ENCODE measurements at regions of chr4 and their contacts with region 1.

Region 1: DNA sequence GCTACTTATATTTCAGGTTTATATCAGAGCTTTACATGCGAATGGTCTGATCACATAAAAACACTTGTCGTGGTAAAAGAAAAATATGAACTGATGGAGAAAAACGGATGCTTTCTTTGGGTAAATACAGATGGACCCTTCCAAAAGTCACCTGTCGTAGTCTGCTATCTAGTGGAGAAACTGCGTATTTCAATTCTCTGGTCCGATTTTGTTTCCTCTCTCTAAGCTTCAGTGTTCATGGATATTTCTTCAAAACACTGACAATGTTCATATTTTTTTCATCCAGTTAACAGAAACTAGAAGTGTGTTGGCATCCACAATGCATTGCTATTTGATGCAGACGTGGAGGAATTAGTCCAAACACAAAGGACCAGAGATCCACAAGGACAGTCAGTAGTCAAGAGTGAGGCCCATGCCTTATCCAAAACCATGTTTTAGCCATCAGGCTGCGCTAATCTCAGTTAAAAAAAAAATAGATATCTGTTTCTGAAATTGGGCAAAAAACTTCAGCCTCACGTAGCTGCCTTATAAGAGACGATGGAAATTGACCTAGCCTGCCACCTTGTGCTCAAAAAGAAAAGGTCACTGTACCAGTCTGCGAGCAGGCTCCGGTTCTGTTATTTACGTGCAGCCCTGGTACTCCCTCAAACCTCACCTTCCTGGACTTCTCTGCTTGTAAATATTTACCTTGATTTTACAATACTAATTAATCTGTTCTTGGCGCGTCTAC is 16.0 kb downstream of the MEPE start:
- DNase-seq: peak; percentile 72
- H3K4me3 Mint-ChIP-seq: peak overlapping the region; percentile 20
- H3K27ac Mint-ChIP-seq: no peak overlapping the region
- H3K4me1 Mint-ChIP-seq: peaks cover 25% of the 10 kb centered on the region
- H3K27me3 Mint-ChIP-seq: no peaks in the 10 kb centered on the region
- CTCF ChIP-seq: peak; percentile 39

Region 2: GRCh38 chr4:87270144-87270543 is 578.6 kb before region 1 on chr4:
- CTCF ChIA-PET with region 1: interaction called, 6 read pairs
- POLR2A ChIA-PET with region 1: interaction called, 3 read pairs
- intact Hi-C with region 1: loop called (anchors 1 kb)
- DNase-seq: peak; percentile 63
- H3K4me3 Mint-ChIP-seq: no peak overlapping the region
- H3K27ac Mint-ChIP-seq: no peak overlapping the region
- H3K4me1 Mint-ChIP-seq: no peaks in the 10 kb centered on the region
- H3K27me3 Mint-ChIP-seq: no peaks in the 10 kb centered on the region
- CTCF ChIP-seq: peak; percentile 59

Region 3: GRCh38 chr4:87465739-87466366 is 382.9 kb before region 1 on chr4:
- CTCF ChIA-PET with region 1: interaction called, 15 read pairs
- POLR2A ChIA-PET with region 1: no interaction called
- intact Hi-C with region 1: loop called (anchors 5 kb)
- DNase-seq: peak; percentile 50
- H3K4me3 Mint-ChIP-seq: no peak overlapping the region
- H3K27ac Mint-ChIP-seq: no peak overlapping the region
- H3K4me1 Mint-ChIP-seq: no peaks in the 10 kb centered on the region
- H3K27me3 Mint-ChIP-seq: no peaks in the 10 kb centered on the region
- CTCF ChIP-seq: peak; percentile 47

Region 4: GRCh38 chr4:87865960-87866598 is 17.3 kb after region 1 on chr4:
- CTCF ChIA-PET with region 1: interaction called, 46 read pairs
- POLR2A ChIA-PET with region 1: no interaction called
- intact Hi-C with region 1: no loop called
- DNase-seq: no peak
- H3K4me3 Mint-ChIP-seq: no peak overlapping the region
- H3K27ac Mint-ChIP-seq: no peak overlapping the region
- H3K4me1 Mint-ChIP-seq: peaks cover 7% of the 10 kb centered on the region
- H3K27me3 Mint-ChIP-seq: no peaks in the 10 kb centered on the region
- CTCF ChIP-seq: no peak

Region 5: DNA sequence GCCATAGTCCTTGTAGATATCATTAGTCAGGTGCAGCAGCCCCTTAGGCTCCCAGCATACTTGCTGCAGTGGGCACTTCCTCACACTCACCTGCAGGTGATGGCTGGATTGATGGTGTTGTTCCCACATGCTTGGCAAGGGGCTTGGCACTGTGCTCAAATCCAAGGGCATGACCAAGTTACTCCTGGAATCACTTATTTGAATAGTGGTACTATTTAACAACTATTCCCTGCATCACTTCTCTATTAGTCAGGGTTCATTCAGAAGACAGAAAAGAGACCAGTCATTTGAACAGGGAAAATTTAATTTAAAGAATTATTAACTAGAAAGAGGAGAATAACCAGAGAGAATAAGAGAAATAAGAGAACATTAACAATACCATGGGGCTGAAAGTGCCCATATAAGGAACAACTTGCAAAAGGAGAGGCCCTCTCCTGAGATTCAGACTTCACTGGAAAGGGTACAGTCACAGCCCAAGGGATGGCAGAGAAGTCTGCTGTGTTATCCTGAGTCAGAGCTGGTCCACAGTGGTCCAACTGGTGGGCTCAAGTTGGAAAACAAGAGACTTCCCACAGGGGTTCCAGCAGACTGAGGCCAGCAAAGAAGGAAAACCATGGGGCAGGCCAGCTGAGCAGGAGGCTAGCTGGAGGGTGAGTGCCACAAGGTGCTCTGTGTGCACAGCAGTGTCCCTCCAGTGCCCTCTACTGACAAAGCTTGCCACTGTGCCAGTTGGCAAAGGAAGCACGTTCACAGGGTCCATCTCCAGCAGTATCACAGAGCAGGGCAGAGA is 136.5 kb after region 1 on chr4:
- CTCF ChIA-PET with region 1: interaction called, 26 read pairs
- POLR2A ChIA-PET with region 1: no interaction called
- intact Hi-C with region 1: loop called (anchors 1 kb)
- DNase-seq: peak; percentile 74
- H3K4me3 Mint-ChIP-seq: no peak overlapping the region
- H3K27ac Mint-ChIP-seq: no peak overlapping the region
- H3K4me1 Mint-ChIP-seq: peaks cover 5% of the 10 kb centered on the region
- H3K27me3 Mint-ChIP-seq: no peaks in the 10 kb centered on the region
- CTCF ChIP-seq: peak; percentile 69

Region 6: DNA sequence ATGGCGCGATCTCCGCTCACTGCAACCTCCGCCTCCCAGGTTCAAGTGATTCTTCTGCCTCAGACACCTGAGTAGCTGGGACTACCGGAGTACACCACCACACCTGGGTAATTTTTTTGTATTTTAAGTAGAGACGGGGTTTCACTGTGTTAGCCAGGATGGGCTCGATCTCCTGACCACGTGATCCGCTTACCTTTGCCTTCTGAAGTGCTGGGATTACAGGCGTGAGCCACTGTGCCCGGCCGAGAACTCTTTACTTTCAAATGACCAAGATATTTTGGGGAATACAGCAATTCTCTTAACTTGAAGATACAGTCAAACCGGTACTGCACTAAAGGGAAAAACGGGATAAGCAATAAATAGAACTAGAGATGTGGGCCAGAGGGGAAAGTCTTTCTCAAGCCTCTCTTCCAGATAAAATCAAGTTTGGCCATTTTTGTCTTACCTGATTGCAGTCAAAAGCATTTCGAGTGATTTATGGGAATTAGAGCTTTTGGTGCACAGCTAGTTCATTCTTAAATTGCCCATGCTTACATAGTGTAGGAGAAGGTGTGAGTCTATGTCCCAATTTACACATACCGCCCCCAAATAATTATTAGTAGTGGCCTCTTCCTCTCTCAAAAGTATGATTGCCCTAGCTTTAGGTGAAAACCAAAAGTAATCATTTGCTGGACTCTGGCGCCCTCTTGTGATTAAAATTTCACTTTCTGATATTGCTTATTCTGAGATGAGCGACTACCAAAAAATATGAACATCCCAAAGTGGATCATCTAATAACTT is 362.9 kb after region 1 on chr4:
- CTCF ChIA-PET with region 1: interaction called, 25 read pairs
- POLR2A ChIA-PET with region 1: interaction called, 3 read pairs
- intact Hi-C with region 1: loop called (anchors 1 kb)
- DNase-seq: peak; percentile 68
- H3K4me3 Mint-ChIP-seq: no peak overlapping the region
- H3K27ac Mint-ChIP-seq: no peak overlapping the region
- H3K4me1 Mint-ChIP-seq: no peaks in the 10 kb centered on the region
- H3K27me3 Mint-ChIP-seq: peaks cover 21% of the 10 kb centered on the region
- CTCF ChIP-seq: peak; percentile 73